ENCODE measurements at regions of chr2 and their contacts with region 1.

Region 1: DNA sequence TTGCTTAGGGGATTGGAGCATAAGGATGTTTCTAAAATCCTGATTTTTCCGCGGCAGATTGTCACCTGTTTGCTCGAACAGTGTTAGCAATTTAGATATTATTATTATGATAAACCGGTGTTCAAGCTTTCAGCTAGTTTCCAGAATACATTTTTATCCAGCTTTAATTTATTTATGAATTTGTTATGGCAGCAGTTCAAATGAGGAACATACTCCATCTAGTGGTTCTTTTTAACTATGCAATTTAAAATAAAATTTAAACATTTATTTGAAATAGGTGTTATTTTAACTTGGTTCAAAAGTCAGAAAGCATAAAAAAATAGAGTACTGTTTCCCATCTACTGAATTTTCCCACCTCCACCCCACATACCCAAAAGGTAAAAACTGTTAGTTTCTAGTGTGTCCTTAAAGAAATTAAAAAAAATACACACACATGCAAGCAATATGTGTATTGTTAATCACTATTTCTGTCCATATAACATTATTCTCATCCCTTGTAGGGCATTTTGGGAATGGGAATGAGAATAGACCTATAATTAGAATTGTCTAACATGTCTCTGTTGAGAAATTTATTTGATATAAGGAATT is 23.2 kb downstream of the ACOXL start:
- DNase-seq: peak; percentile 30
- H3K4me3 ChIP-seq: no peak overlapping the region
- H3K27ac ChIP-seq: no peak overlapping the region
- H3K4me1 ChIP-seq: no peaks in the 10 kb centered on the region
- H3K27me3 ChIP-seq: peaks cover 7 to 19% of the 10 kb centered on the region in 2 experiments
- CTCF ChIP-seq: no peak
- POLR2A ChIP-seq: no peak

Region 2: DNA sequence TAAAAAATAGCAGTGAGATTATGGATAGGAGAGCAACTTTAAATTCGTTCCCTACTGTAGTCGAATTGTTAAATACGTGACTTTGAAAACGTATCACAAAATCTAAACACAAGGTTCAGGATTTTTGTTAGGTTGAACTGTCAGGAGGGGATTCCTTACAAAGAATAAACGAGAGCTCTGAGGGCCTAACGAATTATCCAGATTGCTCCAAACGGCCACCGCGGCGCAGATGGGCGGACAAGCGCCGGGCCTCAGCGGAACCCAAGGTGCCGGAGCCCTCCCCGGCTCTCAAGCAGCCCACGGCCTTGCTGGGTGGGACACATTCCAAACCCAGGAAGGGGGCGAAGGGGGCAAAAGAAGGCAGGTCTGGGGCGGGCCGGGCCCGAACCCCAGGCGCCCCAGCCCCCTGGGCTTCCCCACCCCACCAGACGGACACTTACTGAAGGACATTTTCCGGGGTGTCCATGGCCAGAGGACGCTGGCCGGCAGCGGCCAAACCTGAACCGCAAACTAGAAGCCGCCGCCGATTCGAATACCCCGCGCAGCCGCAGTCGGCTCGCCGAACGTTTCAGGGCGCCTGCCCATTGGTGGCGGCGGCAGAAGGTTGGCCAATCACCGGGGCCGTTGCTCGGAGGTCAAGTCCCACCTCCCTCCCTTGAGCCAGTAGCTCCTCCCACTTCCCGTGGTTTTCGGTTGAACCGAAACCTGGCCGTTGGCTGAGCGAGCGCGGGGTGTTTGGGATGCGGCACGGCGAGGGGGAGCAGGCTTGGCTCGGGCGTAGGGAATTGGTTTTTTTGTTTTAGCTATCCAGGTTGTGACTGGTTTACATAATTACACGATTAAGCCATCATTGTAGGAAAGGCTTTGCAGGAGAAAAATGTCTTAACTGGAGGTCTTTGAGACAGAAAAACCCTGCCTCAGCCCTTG is 77.8 kb before region 1 on chr2 and contains the start of gene BUB1:
- CTCF ChIA-PET with region 1: interaction called, 37 read pairs
- POLR2A ChIA-PET with region 1: no interaction called
- dilution Hi-C with region 1: no loop called
- intact Hi-C with region 1: loop called (anchors 1 kb)
- DNase-seq: peak; percentile 96
- H3K4me3 ChIP-seq: peak within 1 kb of the TSS; percentile 80 to 94 (median 88)
- H3K27ac ChIP-seq: peak within 1 kb of the TSS; percentile 60
- H3K4me1 ChIP-seq: peaks cover 35% of the 10 kb centered on the region
- H3K27me3 ChIP-seq: peaks cover under 1 to 4% of the 10 kb centered on the region in 2 experiments
- CTCF ChIP-seq: no peak
- POLR2A ChIP-seq: peak; percentile 93
- total RNA-seq, gene BUB1: 54.1 and 66.4 TPM in 2 replicates

Region 3: DNA sequence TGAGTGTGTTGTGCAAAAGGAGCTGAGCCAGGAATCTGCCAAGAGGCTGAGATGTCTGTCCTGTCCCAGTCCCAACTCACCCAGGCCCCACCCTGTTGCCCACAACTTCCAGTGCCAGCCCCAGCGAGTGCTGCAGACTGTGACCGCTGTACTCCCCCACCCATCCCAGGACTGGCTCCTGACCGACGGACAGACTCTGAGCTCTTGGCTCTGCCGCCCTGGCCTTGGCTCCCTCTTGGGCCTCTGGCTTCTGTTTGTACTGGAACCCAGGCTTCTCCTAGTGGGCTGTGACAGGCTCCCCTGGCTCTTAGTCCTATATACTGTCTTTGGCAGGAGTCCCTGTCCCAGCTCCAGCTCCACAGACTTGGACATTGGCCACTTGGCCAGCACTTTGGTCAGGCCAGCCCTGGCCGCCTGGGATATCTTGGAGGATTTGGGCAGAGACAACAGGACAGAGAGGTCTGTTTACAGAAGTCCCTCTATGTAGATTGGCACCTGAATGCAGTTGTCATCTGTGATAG is 17.9 kb after region 1 on chr2:
- CTCF ChIA-PET with region 1: interaction called, 13 read pairs
- POLR2A ChIA-PET with region 1: no interaction called
- dilution Hi-C with region 1: no loop called
- intact Hi-C with region 1: loop called (anchors 2 kb)
- DNase-seq: no peak
- H3K4me3 ChIP-seq: no peak overlapping the region
- H3K27ac ChIP-seq: no peak overlapping the region
- H3K4me1 ChIP-seq: no peaks in the 10 kb centered on the region
- H3K27me3 ChIP-seq: peaks cover 15 to 18% of the 10 kb centered on the region in 2 experiments
- CTCF ChIP-seq: no peak
- POLR2A ChIP-seq: no peak

Region 4: DNA sequence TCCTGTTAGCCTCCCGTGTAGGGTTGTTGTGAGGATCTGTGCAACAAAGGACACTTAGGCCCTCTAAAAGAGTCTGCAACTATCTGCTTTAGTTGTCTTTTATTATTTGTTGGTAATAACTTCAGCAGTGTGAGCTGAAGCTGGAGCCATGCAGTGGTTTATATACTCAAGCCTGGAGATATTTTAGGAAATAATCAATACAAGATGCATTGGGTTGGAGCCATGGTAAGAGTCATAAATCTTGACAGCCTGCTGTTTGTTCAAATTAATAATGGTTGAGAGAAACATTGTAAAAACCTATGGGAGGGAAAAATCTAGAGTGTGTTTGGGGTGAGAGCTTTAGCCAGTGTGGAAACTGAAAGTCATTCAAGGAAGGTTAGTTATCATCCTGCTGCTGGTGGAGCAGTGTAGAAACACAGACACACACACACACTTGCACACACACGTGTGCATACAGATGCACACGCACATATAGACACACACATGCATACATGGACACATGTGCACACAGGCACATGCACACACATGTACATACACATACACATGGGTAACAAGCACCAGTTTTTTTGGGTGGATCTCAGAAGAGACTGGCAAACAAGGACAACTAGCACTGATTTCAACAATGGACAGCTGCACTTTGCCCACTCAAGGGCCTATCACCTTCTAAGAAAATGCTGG is 27.8 kb after region 1 on chr2:
- CTCF ChIA-PET with region 1: interaction called, 10 read pairs
- POLR2A ChIA-PET with region 1: no interaction called
- dilution Hi-C with region 1: no loop called
- intact Hi-C with region 1: no loop called
- DNase-seq: no peak
- H3K4me3 ChIP-seq: no peak overlapping the region
- H3K27ac ChIP-seq: no peak overlapping the region
- H3K4me1 ChIP-seq: no peaks in the 10 kb centered on the region
- H3K27me3 ChIP-seq: peaks cover 6 to 12% of the 10 kb centered on the region in 2 experiments
- CTCF ChIP-seq: no peak
- POLR2A ChIP-seq: no peak

Region 5: GRCh38 chr2:110807522-110807921 is 51.9 kb after region 1 on chr2:
- CTCF ChIA-PET with region 1: no interaction called
- POLR2A ChIA-PET with region 1: no interaction called
- dilution Hi-C with region 1: no loop called
- intact Hi-C with region 1: no loop called
- DNase-seq: no peak
- H3K4me3 ChIP-seq: no peak overlapping the region
- H3K27ac ChIP-seq: no peak overlapping the region
- H3K4me1 ChIP-seq: no peaks in the 10 kb centered on the region
- H3K27me3 ChIP-seq: peaks cover 11 to 13% of the 10 kb centered on the region in 2 experiments
- CTCF ChIP-seq: no peak
- POLR2A ChIP-seq: no peak

Region 6: DNA sequence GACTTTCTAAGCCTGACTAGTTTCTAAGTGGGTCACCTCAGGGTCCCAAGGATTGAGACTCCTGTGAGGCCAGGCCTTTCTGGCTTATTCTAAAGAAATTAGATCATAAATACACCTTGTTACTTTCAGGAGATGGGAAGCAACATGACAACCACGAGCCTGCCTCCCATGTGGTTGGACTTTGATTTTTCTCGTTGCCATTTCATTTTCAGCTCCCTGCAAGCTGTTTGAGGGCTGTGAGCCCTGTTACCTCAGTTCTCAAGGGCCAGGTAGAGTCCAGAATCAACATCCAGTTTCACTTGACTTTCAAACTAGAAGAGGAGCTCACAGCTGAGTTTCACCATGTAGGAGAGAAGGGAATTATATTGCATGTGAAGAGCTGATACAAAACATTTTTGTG is 205.4 kb after region 1 on chr2:
- CTCF ChIA-PET with region 1: no interaction called
- POLR2A ChIA-PET with region 1: no interaction called
- dilution Hi-C with region 1: no loop called
- intact Hi-C with region 1: no loop called
- DNase-seq: no peak
- H3K4me3 ChIP-seq: no peak overlapping the region
- H3K27ac ChIP-seq: no peak overlapping the region
- H3K4me1 ChIP-seq: no peaks in the 10 kb centered on the region
- H3K27me3 ChIP-seq: peaks cover 20 to 21% of the 10 kb centered on the region in 2 experiments
- CTCF ChIP-seq: no peak
- POLR2A ChIP-seq: no peak

Measured in endothelial cell of umbilical vein (primary cell).